BJ (cell line): ENCODE measurements at regions of chr7 and their contacts with region 1.

Region 1: DNA sequence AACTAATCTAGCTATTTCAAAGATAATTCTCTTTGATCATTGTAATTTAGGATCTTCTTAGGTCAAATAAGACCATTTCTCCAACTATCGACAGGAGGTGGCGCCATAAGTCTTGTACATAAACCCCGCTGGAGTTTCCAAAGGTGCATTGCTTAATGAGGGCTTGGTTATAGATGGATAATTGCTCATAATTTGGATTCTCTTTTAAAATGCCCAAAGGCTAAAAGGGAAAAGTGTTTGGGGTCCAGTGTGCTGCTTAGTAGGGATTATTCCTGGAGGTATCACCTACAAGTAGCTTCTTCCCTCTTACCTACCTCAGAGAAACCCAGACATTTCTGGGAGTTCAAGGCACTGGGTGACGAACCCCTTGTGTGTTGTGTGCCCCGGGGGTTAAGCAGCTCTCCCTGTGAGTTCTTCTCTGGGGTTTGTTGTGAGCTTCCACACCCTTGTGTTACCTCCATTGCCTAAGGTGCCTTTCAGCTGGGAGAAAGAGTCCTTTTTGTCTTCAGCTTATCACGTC is 75.2 kb downstream of the PAXIP1 start:
- DNase-seq: peak; percentile 32
- H3K4me3 ChIP-seq: peak overlapping the region; percentile 61
- H3K27me3 ChIP-seq: no peaks in the 10 kb centered on the region
- CTCF ChIP-seq: peak; percentile 64

Region 2: DNA sequence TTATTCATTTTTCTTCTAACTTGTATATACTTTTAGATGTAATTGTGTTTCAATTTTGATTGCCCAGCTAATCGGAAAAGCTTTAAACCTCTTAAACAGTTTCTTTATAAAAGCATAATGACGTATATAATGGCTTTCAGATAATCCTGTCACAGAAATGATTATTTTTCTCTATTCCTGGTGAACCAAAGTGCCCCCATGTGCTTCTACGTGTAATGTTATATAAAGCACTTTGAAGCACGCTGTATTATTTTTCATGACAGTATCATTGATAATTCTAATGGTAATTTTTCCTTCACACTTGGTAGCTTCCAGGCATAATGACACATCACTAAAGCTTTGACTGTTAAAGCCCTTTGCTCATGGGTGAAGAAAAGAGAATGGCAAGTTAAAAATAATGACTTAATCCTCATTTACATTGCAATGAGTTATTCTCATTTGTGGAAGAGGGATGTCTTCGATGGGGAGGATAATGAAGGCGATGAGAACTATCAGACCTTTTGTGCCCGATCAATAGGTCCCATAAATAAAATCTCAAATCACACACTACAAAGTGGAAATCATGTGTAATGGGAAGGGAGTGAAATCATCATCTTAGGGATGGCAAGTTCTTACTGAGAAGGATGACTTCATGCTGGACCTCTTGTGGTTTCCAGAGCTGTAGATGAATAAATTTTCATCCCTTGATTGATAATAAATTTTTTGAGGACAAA is 415.4 kb before region 1 on chr7:
- CTCF ChIA-PET with region 1: no interaction called
- POLR2A ChIA-PET with region 1: no interaction called
- DNase-seq: no peak
- H3K4me3 ChIP-seq: no peak overlapping the region
- H3K27me3 ChIP-seq: no peaks in the 10 kb centered on the region
- CTCF ChIP-seq: no peak

Region 3: DNA sequence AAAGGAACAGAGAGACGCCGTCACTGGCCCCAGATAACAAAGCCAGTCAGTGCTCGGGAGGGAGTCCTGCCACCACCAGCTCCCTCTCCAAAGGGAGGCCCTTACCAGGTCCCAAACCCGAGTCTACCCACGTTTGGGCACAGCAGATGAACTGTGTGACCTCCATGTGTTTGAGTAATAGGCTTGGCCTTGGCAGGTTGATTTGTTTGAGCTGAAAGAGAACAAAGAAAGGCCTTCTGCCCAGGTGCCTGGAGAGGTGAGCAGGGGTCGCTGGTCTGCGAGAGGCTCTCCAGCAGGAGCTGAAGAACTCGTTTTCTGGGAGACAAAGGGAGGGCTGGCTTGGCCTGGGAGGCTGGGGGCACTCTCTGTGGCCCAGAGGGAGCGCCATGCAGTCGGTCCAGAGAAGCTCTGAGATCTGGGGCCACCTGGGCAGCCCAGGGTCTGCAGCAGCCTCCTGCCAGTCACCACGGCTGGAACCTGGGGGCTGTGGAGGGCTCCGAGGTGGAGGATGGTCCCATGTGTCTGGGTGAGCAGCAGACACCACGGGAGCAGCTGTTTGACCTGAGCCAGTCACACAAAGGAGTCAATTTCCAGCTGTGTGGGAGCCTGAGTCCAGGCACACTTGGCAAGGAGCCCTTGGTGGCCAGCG is 24.5 kb before region 1 on chr7:
- CTCF ChIA-PET with region 1: no interaction called
- POLR2A ChIA-PET with region 1: no interaction called
- DNase-seq: no peak
- H3K4me3 ChIP-seq: no peak overlapping the region
- H3K27me3 ChIP-seq: no peaks in the 10 kb centered on the region
- CTCF ChIP-seq: no peak

Region 4: DNA sequence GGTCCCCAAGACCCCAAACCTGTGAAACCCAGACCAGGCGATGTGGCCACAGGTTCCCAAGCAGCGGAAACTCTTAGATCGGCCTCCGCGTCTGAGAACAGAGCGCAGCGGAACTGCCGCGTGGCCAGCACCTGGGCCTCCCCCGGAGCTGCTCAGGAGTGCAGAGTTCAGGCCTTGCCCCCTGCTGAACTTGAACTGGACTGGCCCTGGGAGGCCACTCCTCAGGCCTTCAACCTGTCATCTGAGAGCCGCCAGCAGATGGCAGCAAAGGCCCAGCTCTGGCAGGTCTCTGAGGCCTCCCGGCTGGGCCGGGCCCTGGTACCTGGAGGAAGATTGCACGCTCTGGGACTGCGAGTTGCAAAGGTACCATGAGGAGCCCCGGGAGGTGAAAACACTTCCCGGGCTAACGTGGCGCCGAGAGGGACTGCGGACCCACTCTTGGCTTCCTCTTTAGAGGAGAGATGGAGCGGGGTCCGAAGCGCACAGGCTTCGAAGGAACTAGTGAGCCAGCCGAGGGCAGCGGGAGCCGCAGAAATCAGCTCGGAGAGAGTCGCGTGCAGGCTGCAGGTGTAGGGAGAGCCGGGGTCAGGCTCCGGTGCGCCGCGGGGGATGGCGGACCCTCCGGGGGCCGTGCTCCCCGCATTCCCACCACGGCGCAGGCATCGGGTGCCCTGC is 13.9 kb before region 1 on chr7:
- CTCF ChIA-PET with region 1: interaction called, 42 read pairs
- POLR2A ChIA-PET with region 1: no interaction called
- DNase-seq: no peak
- H3K4me3 ChIP-seq: peak overlapping the region; percentile 14; the same call in 1 of the 2 replicates
- H3K27me3 ChIP-seq: no peaks in the 10 kb centered on the region; the same call in none of the 2 replicates
- CTCF ChIP-seq: peak; percentile 93

Region 5: DNA sequence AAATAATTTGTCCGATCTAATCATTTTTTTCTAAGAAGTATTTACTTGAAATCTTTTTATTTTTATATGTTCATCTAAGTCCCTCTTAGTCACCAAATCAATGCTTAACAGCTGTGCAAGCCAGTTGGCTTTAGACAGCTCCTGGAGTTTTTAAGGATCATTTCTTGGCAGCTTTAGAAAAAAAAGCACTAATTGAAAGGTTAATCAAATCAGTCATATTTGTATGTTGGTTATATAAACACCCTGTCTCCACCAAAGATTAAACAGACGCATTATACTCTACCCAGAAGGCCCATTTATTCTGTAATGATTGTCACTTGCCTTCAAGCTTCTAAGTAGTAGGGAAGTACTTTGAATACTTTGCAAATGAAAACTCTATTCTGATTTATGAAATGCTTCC is 15.0 kb after region 1 on chr7:
- CTCF ChIA-PET with region 1: interaction called, 31 read pairs
- POLR2A ChIA-PET with region 1: no interaction called
- DNase-seq: no peak
- H3K4me3 ChIP-seq: no peak overlapping the region
- H3K27me3 ChIP-seq: no peaks in the 10 kb centered on the region
- CTCF ChIP-seq: no peak

Region 6: DNA sequence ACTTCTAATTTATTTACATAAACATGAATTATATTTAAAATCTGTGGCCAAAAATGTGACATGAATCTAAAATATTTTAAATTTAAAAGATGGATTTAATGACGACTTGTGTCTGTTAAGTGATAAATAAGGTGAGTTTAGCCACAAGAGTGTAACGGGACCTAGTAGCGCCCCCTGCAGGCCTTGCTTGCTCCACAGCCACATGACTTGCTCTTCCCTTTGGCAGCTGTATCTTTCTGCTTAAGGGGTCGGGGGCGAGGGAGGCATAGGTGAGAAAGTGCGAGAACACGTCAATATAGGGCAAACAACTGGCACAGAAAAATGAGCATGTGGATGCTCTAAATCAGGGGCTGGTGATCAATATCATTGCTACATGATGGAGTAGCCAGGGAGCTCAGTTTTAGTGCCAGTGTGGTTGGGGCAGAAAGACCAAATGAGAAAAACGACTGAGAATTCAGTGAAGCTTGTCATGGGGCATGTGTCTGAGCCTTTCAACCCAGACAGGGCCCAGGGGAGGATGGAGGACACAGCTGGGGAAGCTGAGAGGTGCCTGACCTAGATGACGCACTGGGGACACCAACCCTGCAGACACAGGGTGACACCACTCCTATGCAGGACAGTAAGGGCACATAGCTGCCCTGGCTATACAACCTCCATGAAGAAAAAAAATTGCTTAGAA is 25.5 kb after region 1 on chr7:
- CTCF ChIA-PET with region 1: interaction called, 33 read pairs
- POLR2A ChIA-PET with region 1: no interaction called
- DNase-seq: no peak
- H3K4me3 ChIP-seq: no peak overlapping the region
- H3K27me3 ChIP-seq: no peaks in the 10 kb centered on the region
- CTCF ChIP-seq: peak; percentile 71

Region 7: DNA sequence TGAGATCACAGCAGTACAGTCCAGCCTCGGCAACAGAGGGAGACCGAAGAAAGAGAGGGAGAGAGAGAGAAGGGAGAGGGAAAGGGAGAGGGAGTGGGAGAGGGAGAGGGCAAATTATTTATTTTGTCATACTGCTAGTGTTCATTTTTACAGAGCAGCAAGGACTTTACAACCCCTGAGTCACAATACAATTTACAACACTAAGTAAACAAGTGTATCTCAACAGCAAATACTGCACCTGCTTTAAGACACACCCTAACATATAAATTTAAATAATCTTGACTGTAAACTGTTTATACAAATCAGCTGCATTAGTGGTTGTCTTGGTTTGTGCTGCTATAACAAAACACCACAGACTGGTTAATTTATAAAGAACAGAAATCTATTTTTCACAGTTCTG is 169.7 kb after region 1 on chr7:
- CTCF ChIA-PET with region 1: no interaction called
- POLR2A ChIA-PET with region 1: no interaction called
- DNase-seq: no peak
- H3K4me3 ChIP-seq: no peak overlapping the region
- H3K27me3 ChIP-seq: no peaks in the 10 kb centered on the region
- CTCF ChIP-seq: no peak

Region 8: GRCh38 chr7:155190688-155191087 is 263.0 kb after region 1 on chr7:
- CTCF ChIA-PET with region 1: interaction called, 11 read pairs
- POLR2A ChIA-PET with region 1: no interaction called
- DNase-seq: no peak
- H3K4me3 ChIP-seq: no peak overlapping the region
- H3K27me3 ChIP-seq: no peaks in the 10 kb centered on the region; the same call in none of the 2 replicates
- CTCF ChIP-seq: peak; percentile 97

Region 9: GRCh38 chr7:155344600-155345433 is 417.1 kb after region 1 on chr7:
- CTCF ChIA-PET with region 1: interaction called, 32 read pairs
- POLR2A ChIA-PET with region 1: no interaction called
- DNase-seq: no peak
- H3K4me3 ChIP-seq: peak overlapping the region; percentile 25
- H3K27me3 ChIP-seq: peaks cover 3% of the 10 kb centered on the region; the same call in 1 of the 2 replicates
- CTCF ChIP-seq: peak; percentile 64

Region 10: GRCh38 chr7:155356323-155357105 is 428.8 kb after region 1 on chr7:
- CTCF ChIA-PET with region 1: interaction called, 15 read pairs
- POLR2A ChIA-PET with region 1: no interaction called
- DNase-seq: no peak
- H3K4me3 ChIP-seq: no peak overlapping the region
- H3K27me3 ChIP-seq: peaks cover 9% of the 10 kb centered on the region
- CTCF ChIP-seq: peak; percentile 30